ENCODE measurements at regions of chr14 and their contacts with region 1.

Region 1: DNA sequence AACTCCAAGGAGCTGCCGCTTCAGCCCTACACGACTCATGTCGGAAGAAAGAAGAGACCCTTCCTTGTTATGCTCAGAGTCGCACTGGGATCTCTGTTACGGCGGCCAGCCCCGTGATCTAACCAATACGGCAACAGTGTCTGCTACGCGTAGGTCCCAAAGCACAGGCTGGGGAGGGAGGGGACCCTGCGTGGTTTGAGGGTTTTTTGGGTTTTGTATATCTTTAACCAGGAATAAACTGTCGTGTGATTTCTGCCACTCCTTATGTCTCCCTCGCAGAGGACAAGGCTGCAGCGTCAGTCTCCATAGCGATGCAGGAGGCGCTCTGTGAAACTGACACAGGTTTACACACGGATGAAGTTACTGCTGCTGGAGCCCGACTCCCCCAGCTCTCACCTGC is 60.0 kb upstream of the DIO3 start:
- DNase-seq: no peak
- H3K4me3 ChIP-seq: no peak overlapping the region
- H3K27ac ChIP-seq: no peak overlapping the region
- H3K4me1 ChIP-seq: no peaks in the 10 kb centered on the region
- H3K27me3 ChIP-seq: no peaks in the 10 kb centered on the region
- CTCF ChIP-seq: no peak

Region 2: GRCh38 chr14:100850841-100851585 is 650.3 kb before region 1 on chr14:
- CTCF ChIA-PET with region 1: no interaction called
- dilution Hi-C with region 1: loop called (anchors 5 kb)
- in situ Hi-C with region 1: no loop called
- intact Hi-C with region 1: no loop called
- DNase-seq: peak; percentile 27
- H3K4me3 ChIP-seq: no peak overlapping the region
- H3K27ac ChIP-seq: no peak overlapping the region
- H3K4me1 ChIP-seq: no peaks in the 10 kb centered on the region
- H3K27me3 ChIP-seq: no peaks in the 10 kb centered on the region
- CTCF ChIP-seq: peak; percentile 75 to 89

Region 3: GRCh38 chr14:100930260-100930659 is 571.1 kb before region 1 on chr14:
- CTCF ChIA-PET with region 1: no interaction called
- dilution Hi-C with region 1: loop called (anchors 5 kb)
- in situ Hi-C with region 1: no loop called
- intact Hi-C with region 1: no loop called
- DNase-seq: no peak
- H3K4me3 ChIP-seq: no peak overlapping the region
- H3K27ac ChIP-seq: no peak overlapping the region
- H3K4me1 ChIP-seq: no peaks in the 10 kb centered on the region
- H3K27me3 ChIP-seq: no peaks in the 10 kb centered on the region
- CTCF ChIP-seq: no peak

Region 4: DNA sequence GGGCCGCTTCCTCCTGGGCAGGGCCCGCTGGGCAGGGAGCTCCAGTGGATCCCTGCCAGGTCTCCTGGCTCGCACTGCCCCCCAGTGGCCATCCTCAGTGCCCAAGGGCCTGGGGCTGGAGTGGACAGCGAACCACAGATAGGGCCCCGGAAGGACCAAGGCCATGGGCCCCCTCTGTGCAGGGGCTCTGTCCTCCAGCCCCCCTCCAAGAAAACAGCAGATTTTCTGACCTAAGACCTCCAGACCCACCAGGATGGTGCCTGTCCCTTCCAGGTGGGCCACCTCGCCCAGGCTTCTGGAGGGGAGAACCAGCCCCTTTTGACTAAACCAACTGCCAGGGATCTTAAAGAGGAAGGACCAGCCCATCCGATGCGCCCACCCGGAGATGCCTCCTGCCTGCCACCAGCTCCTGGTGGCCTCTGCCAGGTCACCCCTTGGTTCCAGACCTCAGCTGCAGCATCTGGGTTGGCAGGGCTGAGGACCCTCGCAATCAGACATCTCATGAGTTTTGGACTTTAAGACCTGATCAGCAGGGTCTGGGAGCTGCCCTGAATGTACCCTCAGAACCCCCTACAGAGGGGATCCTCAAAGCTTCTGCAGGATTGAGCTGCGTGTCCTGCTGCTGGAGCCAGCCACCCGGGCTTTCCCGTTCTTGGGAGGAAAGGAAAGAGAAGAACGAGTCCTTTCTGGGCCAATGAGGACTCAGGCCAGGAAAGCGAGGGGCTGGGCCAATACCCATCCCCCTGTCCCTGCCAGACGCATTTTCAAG is 265.8 kb before region 1 on chr14:
- CTCF ChIA-PET with region 1: no interaction called
- dilution Hi-C with region 1: loop called (anchors 5 kb)
- in situ Hi-C with region 1: no loop called
- intact Hi-C with region 1: no loop called
- DNase-seq: peak; percentile 5
- H3K4me3 ChIP-seq: no peak overlapping the region
- H3K27ac ChIP-seq: no peak overlapping the region
- H3K4me1 ChIP-seq: no peaks in the 10 kb centered on the region
- H3K27me3 ChIP-seq: no peaks in the 10 kb centered on the region
- CTCF ChIP-seq: peak in 1 of 2 donors; percentile 54

Region 5: GRCh38 chr14:101454229-101454628 is 47.1 kb before region 1 on chr14:
- CTCF ChIA-PET with region 1: no interaction called
- dilution Hi-C with region 1: loop called (anchors 5 kb)
- in situ Hi-C with region 1: no loop called
- intact Hi-C with region 1: no loop called
- DNase-seq: no peak
- H3K4me3 ChIP-seq: no peak overlapping the region
- H3K27ac ChIP-seq: no peak overlapping the region
- H3K4me1 ChIP-seq: no peaks in the 10 kb centered on the region
- H3K27me3 ChIP-seq: peaks cover 21% of the 10 kb centered on the region
- CTCF ChIP-seq: no peak

Region 6: GRCh38 chr14:101573340-101573739 is 72.0 kb after region 1 on chr14:
- CTCF ChIA-PET with region 1: no interaction called
- dilution Hi-C with region 1: loop called (anchors 5 kb)
- in situ Hi-C with region 1: no loop called
- intact Hi-C with region 1: no loop called
- DNase-seq: no peak
- H3K4me3 ChIP-seq: no peak overlapping the region
- H3K27ac ChIP-seq: no peak overlapping the region
- H3K4me1 ChIP-seq: no peaks in the 10 kb centered on the region
- H3K27me3 ChIP-seq: no peaks in the 10 kb centered on the region
- CTCF ChIP-seq: no peak

Region 7: GRCh38 chr14:101635749-101636560 is 134.6 kb after region 1 on chr14:
- CTCF ChIA-PET with region 1: no interaction called
- dilution Hi-C with region 1: loop called (anchors 5 kb)
- in situ Hi-C with region 1: no loop called
- intact Hi-C with region 1: no loop called
- DNase-seq: no peak
- H3K4me3 ChIP-seq: no peak overlapping the region
- H3K27ac ChIP-seq: no peak overlapping the region
- H3K4me1 ChIP-seq: no peaks in the 10 kb centered on the region
- H3K27me3 ChIP-seq: no peaks in the 10 kb centered on the region
- CTCF ChIP-seq: no peak

Measured in mammary epithelial cell (primary cell).